ENCODE measurements at regions of chr11 and their contacts with region 1.

Region 1: GRCh38 chr11:25981998-25982397 is 349.9 kb upstream of the ANO3 start:
- DNase-seq: no peak
- ATAC-seq: peak; percentile 89

Region 2: DNA sequence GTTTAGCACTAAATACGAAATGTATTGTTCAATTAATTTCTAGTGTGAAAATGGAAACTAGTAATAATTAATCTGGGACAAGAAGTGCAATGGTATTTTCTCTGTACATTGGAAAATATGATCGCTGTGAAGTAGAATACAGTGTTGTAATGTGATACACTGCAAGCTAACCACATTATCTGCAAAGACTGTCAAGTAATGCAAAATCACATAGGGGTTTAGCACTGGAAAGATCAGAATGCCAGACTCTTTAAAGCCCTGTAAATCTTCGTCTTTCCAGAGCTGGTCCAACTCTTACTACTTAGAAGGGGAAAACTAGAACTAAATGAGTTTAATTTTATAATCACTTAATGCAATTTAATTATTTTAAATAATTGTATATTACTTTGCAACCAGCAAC is 194.6 kb before region 1 on chr11:
- intact Hi-C with region 1: no loop called
- DNase-seq: no peak
- ATAC-seq: no peak

Region 3: DNA sequence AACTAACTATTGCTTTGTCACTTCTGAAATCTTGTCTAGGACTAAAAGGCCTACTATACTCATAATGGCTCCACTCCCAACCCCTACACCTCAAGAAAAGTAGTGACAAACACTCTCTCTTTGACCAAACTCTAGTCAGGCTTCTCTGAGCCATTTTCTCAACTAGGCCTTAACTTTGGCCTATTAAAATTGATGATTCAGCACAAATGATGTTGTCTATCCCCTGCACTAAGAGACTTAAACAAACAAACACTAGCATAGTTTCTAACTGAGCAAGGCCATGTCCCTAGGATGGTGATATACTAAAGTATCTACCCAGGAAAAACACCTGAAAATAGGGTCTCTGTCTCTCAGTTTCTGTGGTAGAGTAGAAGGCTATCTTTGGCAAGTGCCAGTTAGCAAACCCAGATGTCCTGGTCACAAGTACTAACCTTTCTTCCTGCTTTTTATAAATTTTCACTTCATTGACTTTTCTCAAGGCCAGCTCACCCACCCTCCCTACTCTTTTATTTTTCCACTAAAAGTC is 130.3 kb after region 1 on chr11:
- intact Hi-C with region 1: no loop called
- DNase-seq: no peak
- ATAC-seq: no peak

Region 4: GRCh38 chr11:26134481-26135355 is 152.7 kb after region 1 on chr11:
- intact Hi-C with region 1: loop called (anchors 5 kb)
- DNase-seq: no peak
- ATAC-seq: peak; percentile 42

Region 5: DNA sequence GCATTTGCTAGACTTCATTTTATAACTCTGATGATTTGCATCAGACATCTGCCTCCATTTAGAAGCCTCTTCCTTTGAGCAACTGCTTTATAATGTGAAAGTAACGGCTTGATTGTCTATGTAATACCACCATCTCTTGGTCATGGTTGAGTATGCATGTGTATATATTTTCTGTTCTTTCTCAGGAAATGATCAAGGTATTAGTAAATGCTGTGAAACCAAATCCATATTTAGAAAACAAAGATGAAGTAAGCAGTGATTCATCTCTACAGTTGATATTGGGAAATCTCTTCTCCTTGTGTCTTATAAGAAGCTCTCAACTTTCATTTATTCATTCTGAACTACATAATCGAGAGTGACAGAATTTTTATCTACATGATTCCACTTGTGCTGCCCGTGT is 245.3 kb after region 1 on chr11:
- intact Hi-C with region 1: loop called (anchors 5 kb)
- DNase-seq: no peak
- ATAC-seq: peak; percentile 37

Measured in left ventricle myocardium superior (tissue), 1 donor.